ENCODE measurements at regions of chr1 and their contacts with region 1.

Region 1: DNA sequence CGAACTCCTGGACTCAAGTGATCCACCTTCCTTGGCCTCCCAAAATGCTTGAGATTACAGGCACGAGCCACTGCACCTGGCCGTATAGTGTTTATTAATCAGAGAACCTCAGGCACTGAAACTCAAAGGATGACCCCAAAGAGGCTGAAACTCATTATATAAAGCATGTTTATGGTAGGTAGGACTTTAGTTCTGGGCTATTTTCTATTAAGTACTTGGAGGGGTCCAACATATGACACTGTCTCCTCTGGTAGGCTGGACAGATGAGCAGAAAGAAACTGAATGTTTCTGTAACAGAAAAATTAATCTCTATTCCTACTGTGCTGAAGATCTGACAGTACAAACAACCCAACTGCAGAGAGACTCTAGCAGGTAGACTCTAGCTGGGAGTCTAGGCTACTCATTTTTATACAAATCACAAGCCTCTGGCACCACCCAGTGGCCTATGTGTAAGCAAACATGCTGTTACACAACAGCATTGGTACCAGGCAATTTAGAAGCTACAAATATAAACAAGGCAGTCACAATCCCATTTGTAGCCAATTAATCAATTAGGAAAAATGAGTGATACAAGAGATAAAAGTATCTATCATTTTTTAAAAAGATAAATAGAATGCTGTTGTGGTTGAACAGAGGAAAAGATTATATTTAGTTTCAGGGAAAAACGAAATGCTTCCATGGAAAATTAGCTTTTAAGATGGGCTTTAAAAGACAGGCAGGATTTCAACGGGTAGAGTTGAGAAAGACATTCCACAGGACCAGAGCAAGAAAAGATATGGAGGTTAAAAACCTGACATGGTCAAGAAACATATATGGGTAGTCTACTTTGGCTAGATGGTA is 10.4 kb downstream of the DCAF8 start:
- DNase-seq: peak; percentile 31
- ATAC-seq: peak; percentile 98
- H3K4me3 ChIP-seq: no peak overlapping the region
- H3K27ac ChIP-seq: no peak overlapping the region; the same call in 1 of the 2 replicates
- H3K4me1 ChIP-seq: no peaks in the 10 kb centered on the region
- H3K27me3 ChIP-seq: no peaks in the 10 kb centered on the region
- CTCF ChIP-seq: peak; percentile 73 to 88 (median 73); a peak in 5 of 6 replicates
- EP300 ChIP-seq: no peak
- POLR2A ChIP-seq: no peak
- RAD21 ChIP-seq: peak; percentile 90

Region 2: GRCh38 chr1:160098852-160099561 is 152.9 kb before region 1 on chr1:
- CTCF ChIA-PET with region 1: interaction called, 189 read pairs
- POLR2A ChIA-PET with region 1: interaction called, 3 read pairs
- RAD21 ChIA-PET with region 1: interaction called, 85 read pairs
- SMC1A ChIA-PET with region 1: interaction called, 57 read pairs
- in situ Hi-C with region 1: loop called (anchors 5 kb)
- intact Hi-C with region 1: loop called (anchors 1 kb)
- DNase-seq: peak; percentile 55
- ATAC-seq: peak; percentile 85
- H3K4me3 ChIP-seq: peak overlapping the region; percentile 82
- H3K27ac ChIP-seq: peak overlapping the region; percentile 54; the same call in 1 of the 2 replicates
- H3K4me1 ChIP-seq: peaks cover 25% of the 10 kb centered on the region
- H3K27me3 ChIP-seq: no peaks in the 10 kb centered on the region
- CTCF ChIP-seq: no peak
- EP300 ChIP-seq: no peak
- POLR2A ChIP-seq: no peak
- RAD21 ChIP-seq: no peak

Region 3: DNA sequence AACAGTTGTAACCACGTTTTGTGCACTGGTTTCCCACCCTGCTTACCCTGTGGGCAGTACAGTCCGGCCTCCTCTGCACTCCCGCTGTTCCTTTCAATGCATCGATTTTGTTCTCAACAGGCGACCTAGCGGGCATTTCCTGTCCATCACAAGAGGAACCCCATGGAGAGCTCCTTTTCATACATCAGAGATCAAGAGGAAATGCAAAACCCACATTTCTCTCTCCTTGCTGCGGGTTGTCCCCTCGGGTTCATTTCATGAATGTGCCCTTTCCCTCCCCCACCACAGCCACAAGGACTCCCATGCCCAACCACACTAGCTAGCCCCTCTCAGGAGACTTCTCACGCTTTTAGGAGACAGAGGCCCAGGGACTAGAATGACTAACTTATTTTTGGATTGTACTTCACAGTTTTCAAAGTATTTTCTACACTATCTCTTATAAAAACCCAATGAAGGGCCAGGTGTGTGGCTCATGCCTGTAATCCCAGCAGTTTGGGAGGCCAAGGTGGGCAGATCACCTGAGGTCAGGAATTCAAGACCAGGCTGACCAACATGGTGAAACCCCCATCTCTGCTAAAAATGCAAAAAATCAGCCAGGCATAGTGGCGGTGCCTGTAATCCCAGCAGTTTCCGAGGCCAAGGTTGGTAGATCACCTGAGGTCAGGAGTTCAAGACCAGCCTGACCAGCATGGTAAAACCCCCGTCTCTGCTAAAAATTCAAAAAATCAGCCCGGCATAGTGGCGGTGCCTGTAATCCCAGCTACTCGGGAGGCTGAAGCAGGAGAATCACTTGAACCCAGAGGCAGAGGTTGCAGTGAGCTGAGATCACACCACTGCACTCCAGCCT is 82.1 kb before region 1 on chr1:
- CTCF ChIA-PET with region 1: interaction called, 26 read pairs
- POLR2A ChIA-PET with region 1: no interaction called
- RAD21 ChIA-PET with region 1: interaction called, 8 read pairs
- SMC1A ChIA-PET with region 1: interaction called, 5 read pairs
- in situ Hi-C with region 1: no loop called
- intact Hi-C with region 1: no loop called
- DNase-seq: peak; percentile 71
- ATAC-seq: peak; percentile 86
- H3K4me3 ChIP-seq: no peak overlapping the region
- H3K27ac ChIP-seq: no peak overlapping the region
- H3K4me1 ChIP-seq: peaks cover 21% of the 10 kb centered on the region
- H3K27me3 ChIP-seq: no peaks in the 10 kb centered on the region; a peak in 2 of 4 replicates
- CTCF ChIP-seq: no peak
- EP300 ChIP-seq: peak in 1 of 2 experiments; percentile 57; a peak in 2 of 4 replicates
- POLR2A ChIP-seq: no peak
- RAD21 ChIP-seq: no peak

Region 4: DNA sequence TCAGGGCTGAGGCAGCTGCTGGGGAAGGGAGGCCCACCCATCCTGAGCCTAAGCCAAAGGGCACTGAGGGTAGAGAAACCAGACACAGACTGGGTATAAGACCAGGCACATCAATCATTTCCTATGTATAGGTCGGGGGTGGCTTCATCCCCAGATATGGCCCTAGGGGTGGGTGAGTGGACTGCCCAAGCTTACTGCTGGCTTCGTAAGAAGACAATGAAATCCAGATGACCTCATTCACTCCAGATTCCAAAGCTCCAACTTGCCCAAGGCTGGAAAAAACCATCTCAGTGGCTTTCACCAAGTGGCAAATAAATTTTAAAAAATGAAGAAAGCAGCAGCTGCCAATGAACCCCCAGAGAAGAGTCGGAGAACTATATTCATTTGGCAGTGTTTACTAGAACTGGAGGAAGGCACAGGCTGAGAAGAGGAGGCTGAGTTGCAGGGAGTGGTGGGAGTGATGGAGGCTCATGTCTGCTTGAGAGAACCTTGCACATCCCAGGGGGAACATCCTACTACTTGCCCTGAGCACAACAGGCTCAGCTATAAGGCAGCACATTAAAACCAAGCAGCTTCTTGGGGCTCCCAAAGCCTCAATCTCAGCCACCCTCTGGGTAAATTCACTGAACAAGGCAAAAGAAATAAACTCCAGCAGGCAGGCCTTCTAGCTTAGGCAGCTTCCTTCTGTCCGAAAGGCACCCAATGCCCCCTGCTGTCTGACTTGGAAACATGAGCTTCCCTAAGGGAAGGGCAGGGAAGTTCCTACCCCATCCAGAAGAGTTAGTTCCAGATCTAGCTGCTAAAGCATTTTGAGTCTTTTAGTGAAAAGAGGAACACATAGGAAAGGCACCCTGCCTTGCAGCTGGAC is 32.6 kb before region 1 on chr1:
- CTCF ChIA-PET with region 1: interaction called, 40 read pairs
- POLR2A ChIA-PET with region 1: interaction called, 3 read pairs
- RAD21 ChIA-PET with region 1: interaction called, 20 read pairs
- SMC1A ChIA-PET with region 1: interaction called, 28 read pairs
- in situ Hi-C with region 1: no loop called
- intact Hi-C with region 1: no loop called
- DNase-seq: no peak
- ATAC-seq: peak; percentile 44
- H3K4me3 ChIP-seq: no peak overlapping the region
- H3K27ac ChIP-seq: no peak overlapping the region
- H3K4me1 ChIP-seq: no peaks in the 10 kb centered on the region
- H3K27me3 ChIP-seq: no peaks in the 10 kb centered on the region
- CTCF ChIP-seq: peak; percentile 21 to 34 (median 34); a peak in 3 of 6 replicates
- EP300 ChIP-seq: no peak
- POLR2A ChIP-seq: no peak
- RAD21 ChIP-seq: peak; percentile 43

Region 5: GRCh38 chr1:160238408-160238807 is 13.5 kb before region 1 on chr1:
- CTCF ChIA-PET with region 1: interaction called, 116 read pairs
- POLR2A ChIA-PET with region 1: interaction called, 3 read pairs
- RAD21 ChIA-PET with region 1: interaction called, 31 read pairs
- SMC1A ChIA-PET with region 1: interaction called, 34 read pairs
- in situ Hi-C with region 1: no loop called
- intact Hi-C with region 1: no loop called
- DNase-seq: no peak
- ATAC-seq: no peak
- H3K4me3 ChIP-seq: no peak overlapping the region
- H3K27ac ChIP-seq: no peak overlapping the region
- H3K4me1 ChIP-seq: peaks cover 4% of the 10 kb centered on the region; the same call in 1 of the 2 replicates
- H3K27me3 ChIP-seq: no peaks in the 10 kb centered on the region
- CTCF ChIP-seq: no peak
- EP300 ChIP-seq: no peak
- POLR2A ChIP-seq: no peak
- RAD21 ChIP-seq: no peak

Region 6: DNA sequence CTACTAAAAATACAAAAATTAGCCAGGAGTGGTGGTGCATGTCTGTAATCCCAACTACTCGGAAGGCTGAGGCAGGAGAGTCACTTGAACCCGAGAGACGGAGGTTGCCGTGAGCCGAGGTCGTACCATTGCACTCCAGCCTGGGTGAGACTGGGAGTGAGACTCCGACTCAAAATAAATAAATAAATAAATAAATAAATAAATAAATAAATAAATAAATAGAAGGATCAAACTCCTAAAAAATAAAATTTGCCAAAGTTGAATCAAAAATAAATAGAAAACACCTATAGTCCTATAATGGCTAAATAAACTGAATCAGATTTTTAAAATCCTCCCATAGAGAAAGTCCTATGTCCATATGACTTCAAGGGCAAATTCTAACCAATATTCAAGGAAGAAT is 48.3 kb after region 1 on chr1:
- CTCF ChIA-PET with region 1: interaction called, 141 read pairs
- POLR2A ChIA-PET with region 1: no interaction called
- RAD21 ChIA-PET with region 1: interaction called, 3 read pairs
- SMC1A ChIA-PET with region 1: no interaction called
- in situ Hi-C with region 1: no loop called
- intact Hi-C with region 1: no loop called
- DNase-seq: no peak
- ATAC-seq: no peak
- H3K4me3 ChIP-seq: no peak overlapping the region
- H3K27ac ChIP-seq: no peak overlapping the region
- H3K4me1 ChIP-seq: no peaks in the 10 kb centered on the region
- H3K27me3 ChIP-seq: no peaks in the 10 kb centered on the region
- CTCF ChIP-seq: no peak
- EP300 ChIP-seq: no peak
- POLR2A ChIP-seq: no peak
- RAD21 ChIP-seq: no peak

Measured in GM12878 (cell line).